Ascending aorta (tissue), 2 donors: ENCODE measurements at regions of chr1 and their contacts with region 1.

Region 1: DNA sequence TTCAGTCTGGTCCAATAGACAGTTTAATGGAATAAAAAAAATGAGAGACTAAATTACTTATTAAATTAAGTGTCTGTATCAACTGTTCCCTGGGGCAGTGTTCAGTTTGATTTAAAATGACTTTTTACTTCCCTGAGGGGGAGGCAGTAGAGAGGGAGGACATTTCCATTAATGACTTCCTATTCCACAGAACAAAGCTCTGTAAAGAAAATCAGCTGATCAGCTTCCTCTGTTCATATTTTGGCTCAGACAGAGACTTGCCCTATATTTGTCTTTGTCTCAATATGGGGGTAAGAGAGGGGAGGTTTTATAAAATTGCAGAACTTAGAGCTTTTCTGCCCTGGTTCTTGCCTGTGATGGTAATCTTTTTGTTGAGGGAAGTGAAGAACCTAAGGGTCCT is 8.4 kb downstream of the CFAP126 start:
- DNase-seq: no peak
- H3K4me3 ChIP-seq: no peak overlapping the region
- H3K27ac ChIP-seq: no peak overlapping the region
- H3K4me1 ChIP-seq: no peaks in the 10 kb centered on the region
- H3K27me3 ChIP-seq: no peaks in the 10 kb centered on the region
- CTCF ChIP-seq: no peak

Region 2: DNA sequence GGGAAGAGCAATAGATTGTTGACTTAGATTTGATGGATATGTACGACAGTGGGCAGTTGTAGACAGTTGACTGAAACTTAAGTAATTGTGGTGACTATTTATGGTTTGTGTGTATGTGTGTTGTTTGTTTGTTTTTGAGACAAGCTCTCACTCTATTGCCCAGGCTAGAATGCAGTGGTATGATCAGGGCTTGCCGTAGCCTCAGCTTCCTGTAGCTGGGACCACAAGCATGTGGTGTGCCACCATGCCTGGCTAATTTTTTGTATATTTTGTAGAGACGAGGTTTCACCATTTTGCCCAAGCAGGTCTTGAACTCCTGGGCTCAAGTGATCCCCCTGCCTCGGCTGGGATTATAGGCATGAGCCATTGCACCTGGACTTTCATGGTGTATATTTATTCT is 35.3 kb before region 1 on chr1:
- intact Hi-C with region 1: loop called (anchors 1 kb)
- DNase-seq: no peak
- H3K4me3 ChIP-seq: no peak overlapping the region
- H3K27ac ChIP-seq: no peak overlapping the region
- H3K4me1 ChIP-seq: no peaks in the 10 kb centered on the region
- H3K27me3 ChIP-seq: no peaks in the 10 kb centered on the region
- CTCF ChIP-seq: no peak